BJ (cell line): ENCODE measurements at regions of chr1 and their contacts with region 1.

Region 1: GRCh38 chr1:209627732-209628196 is 24.5 kb downstream of the LAMB3 start:
- DNase-seq: no peak
- H3K4me3 ChIP-seq: no peak overlapping the region
- H3K27me3 ChIP-seq: no peaks in the 10 kb centered on the region
- CTCF ChIP-seq: peak; percentile 99

Region 2: DNA sequence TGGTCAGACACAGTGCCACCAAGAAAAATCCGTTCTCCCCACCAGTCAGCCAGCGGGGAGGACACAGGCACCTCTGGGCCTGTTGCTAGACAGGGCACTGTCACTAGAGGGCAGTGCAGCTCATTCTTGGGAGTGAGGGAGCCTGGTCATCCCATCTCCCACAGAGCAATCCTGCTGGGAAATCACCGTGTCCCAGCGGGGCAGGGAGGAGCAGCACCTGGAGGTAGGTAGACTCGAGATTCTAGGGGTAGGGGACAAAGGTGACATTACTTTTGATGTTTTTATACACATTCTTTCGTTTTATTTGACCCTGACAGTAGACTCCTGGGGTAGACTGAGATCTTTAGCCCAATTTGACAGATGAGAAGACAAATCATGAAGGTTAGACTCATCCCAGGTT is 51.0 kb before region 1 on chr1:
- CTCF ChIA-PET with region 1: interaction called, 154 read pairs
- POLR2A ChIA-PET with region 1: no interaction called
- DNase-seq: no peak
- H3K4me3 ChIP-seq: no peak overlapping the region
- H3K27me3 ChIP-seq: peaks cover 2% of the 10 kb centered on the region; the same call in 1 of the 2 replicates
- CTCF ChIP-seq: peak; percentile 97

Region 3: DNA sequence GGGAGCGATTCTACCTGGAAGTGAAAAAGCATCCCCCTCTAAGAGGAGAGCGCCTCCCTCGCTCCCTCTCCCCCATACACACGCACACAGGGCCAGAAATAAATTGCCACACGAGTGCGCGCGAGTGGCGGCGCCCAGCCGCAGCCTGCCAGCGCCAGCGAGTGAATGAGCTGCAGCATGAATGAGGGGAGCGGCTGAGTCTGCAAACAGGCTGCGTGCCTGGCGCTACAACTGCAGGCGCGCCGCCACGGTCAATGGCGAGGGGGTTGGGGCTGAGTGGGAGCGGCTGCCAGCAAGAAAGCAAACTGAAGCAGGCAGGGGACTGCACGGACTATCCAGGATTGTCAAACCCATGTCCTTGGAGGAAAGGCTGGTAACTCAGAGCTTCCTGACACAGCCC is 42.1 kb before region 1 on chr1:
- CTCF ChIA-PET with region 1: interaction called, 154 read pairs
- POLR2A ChIA-PET with region 1: no interaction called
- DNase-seq: no peak
- H3K4me3 ChIP-seq: no peak overlapping the region
- H3K27me3 ChIP-seq: no peaks in the 10 kb centered on the region
- CTCF ChIP-seq: peak; percentile 18; the same call in 1 of the 2 replicates

Region 4: DNA sequence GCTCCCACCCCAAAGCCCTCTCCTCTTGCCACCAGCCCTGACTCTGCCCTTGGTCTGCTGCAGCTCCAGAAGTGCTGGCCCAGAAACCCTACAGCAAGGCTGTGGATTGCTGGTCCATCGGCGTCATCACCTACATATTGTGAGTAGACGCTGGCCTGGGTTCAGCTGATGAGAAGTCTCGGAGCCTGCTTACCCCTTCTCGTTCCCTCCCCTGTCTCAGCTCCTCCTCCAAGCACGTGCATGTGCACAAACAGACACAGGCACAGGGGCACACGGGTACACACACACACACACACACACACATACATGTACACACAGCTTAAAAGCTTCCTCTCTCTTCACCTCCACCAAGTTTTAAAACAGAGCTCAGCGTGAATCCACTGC is 20.0 kb before region 1 on chr1:
- CTCF ChIA-PET with region 1: interaction called, 19 read pairs
- POLR2A ChIA-PET with region 1: no interaction called
- DNase-seq: no peak
- H3K4me3 ChIP-seq: no peak overlapping the region
- H3K27me3 ChIP-seq: no peaks in the 10 kb centered on the region; the same call in 1 of the 2 replicates
- CTCF ChIP-seq: no peak

Region 5: DNA sequence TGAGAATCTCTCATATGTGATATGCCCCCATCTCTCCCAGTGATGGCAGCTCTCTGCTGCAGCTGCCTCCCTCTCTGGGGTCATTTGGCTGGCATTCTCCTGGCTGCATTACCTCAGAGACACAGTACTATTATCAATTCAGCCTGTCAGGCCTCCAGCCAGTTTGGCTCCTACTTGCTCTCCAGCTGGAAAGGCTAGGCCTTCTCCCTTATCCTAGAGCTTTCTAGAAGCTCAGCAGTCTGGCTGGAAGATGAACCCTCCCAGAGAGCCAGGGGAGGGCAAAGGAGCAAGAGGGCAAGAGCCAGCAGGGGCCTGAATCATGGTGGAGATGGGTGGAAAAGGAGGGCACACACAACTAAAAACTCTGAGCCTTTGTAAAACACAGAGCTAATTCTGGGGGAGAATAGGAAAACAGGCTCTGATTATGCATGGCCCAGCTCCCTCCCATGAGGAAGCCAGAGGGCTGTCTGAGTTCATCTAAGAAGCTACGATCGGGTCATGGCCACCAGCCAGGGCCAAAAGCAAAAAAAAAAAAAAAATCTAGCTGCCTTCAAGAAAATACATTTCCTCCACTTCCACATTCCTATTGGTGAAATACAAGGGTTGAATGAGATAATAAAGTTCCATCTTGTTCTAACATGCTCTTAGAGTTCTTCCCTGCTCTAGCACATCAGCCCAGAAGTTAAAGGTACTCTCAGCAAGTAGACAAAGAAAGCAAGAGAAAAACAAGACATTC is 15.7 kb after region 1 on chr1:
- CTCF ChIA-PET with region 1: interaction called, 13 read pairs
- POLR2A ChIA-PET with region 1: no interaction called
- DNase-seq: no peak
- H3K4me3 ChIP-seq: no peak overlapping the region
- H3K27me3 ChIP-seq: no peaks in the 10 kb centered on the region
- CTCF ChIP-seq: no peak